Activated T-helper 1 cell treated with anti-CD3 and anti-CD28 coated beads, Interleukin-12 subunit alpha, Interleukin-12 subunit beta, Interleukin-2, Interleukin-4 antibody, amounts not matched to agents 30 ng/mL and 10 ng/mL and 1 ng/mL, durations not matched to agents 14 hours and 24 hours and 36 hours (primary cell): ENCODE measurements at regions of chr15 and their contacts with region 1.

Region 1: GRCh38 chr15:41283653-41284426 is 48.6 kb downstream of the OIP5 start:
- DNase-seq: peak; percentile 96
- H3K4me3 Mint-ChIP-seq: peak overlapping the region; percentile 97
- H3K27ac Mint-ChIP-seq: peak overlapping the region; percentile 92
- H3K4me1 Mint-ChIP-seq: peaks cover 51% of the 10 kb centered on the region
- H3K27me3 Mint-ChIP-seq: no peaks in the 10 kb centered on the region

Region 2: GRCh38 chr15:40843885-40844695 is 439.8 kb before region 1 on chr15 and contains the start of gene SPINT1:
- intact Hi-C with region 1: loop called (anchors 5 kb)
- DNase-seq: peak; percentile 27
- H3K4me3 Mint-ChIP-seq: peak within 1 kb of the TSS; percentile 87
- H3K27ac Mint-ChIP-seq: peak within 1 kb of the TSS; percentile 75
- H3K4me1 Mint-ChIP-seq: peaks cover 33% of the 10 kb centered on the region
- H3K27me3 Mint-ChIP-seq: peaks cover 15% of the 10 kb centered on the region
- total RNA-seq, gene SPINT1: 11.0 and 12.4 TPM in 2 replicates

Region 3: GRCh38 chr15:41241221-41241964 is 42.4 kb before region 1 on chr15:
- intact Hi-C with region 1: no loop called
- DNase-seq: no peak
- H3K4me3 Mint-ChIP-seq: no peak overlapping the region
- H3K27ac Mint-ChIP-seq: no peak overlapping the region
- H3K4me1 Mint-ChIP-seq: peaks cover 10% of the 10 kb centered on the region
- H3K27me3 Mint-ChIP-seq: no peaks in the 10 kb centered on the region

Region 4: DNA sequence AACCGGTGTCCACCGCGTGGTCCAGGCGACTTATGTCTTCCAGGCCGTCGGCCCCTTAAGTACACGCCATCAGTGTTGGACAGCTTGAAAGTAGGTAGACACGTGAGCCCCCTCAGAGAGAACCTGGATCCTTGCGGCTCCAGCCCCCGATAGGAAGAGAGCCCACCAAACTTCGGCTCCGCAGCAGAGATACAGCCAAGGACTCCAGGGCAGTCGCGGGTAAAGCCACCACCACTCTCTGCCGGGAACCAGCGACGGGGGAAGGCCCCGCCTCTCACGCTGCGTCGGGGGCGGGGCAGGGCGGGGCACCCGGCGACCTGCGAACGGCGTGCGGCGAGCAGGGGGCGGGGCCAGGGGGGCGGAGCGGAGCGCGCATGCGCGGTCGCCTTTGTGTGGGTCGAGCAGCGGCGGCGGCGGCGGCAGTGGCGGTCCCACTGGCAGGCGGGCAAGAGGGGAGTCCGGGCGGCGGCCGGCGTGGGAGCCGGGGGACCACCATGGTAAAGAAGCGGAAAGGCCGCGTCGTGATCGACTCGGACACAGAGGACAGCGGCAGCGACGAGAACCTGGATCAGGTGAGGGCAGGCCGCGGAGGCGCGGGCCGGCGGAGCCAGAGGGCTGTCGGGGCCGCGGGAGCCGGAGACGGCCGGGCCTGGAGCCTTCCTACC is 133.0 kb after region 1 on chr15 and contains the start of gene RTF1:
- intact Hi-C with region 1: loop called (anchors 5 kb)
- DNase-seq: peak; percentile 98
- H3K4me3 Mint-ChIP-seq: peak within 1 kb of the TSS; percentile 93
- H3K27ac Mint-ChIP-seq: peak within 1 kb of the TSS; percentile 96
- H3K4me1 Mint-ChIP-seq: peaks cover 40% of the 10 kb centered on the region
- H3K27me3 Mint-ChIP-seq: no peaks in the 10 kb centered on the region
- total RNA-seq, gene RTF1: 41.0 and 44.7 TPM in 2 replicates